T-cell (primary cell): ENCODE measurements at regions of chr11 and their contacts with region 1.

Region 1: DNA sequence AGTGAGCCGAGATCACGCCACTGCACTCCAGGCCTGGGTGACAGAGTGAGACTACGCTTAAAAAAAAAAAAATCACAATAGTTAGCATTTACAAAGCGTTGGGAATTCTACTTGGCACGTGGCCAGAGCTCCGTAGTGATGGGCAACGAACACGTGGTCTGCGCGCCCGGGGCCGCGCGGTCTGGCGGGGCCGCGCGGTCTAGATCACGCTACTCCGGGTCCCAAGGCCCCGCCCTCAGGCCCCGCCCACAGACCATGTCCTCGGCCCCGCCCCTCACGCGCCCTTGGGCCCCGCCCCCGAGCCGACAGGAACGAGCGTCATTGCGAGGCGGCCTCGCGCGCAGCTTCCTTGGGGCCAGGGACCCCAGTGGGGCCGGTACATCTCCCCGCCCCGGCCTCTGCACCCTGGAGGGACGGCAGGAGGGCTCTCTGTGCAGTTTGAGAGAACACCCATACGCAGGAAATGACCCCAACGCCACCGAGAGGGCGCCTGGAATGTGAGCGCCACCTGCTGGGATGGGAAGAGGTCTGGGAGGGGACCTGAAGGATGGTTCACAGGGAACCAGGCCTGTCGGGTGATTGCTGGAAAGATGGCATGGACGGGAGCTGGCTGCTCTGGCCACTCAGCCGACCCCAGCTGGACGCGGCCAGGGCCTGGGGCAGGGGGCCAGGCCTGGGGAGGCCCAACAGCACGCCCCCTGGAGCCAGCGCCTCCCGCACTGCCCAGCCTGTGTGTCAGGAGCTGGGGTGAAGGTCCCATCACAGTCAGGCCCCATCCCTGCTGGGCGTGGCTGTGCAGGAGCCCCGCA is 2.0 kb upstream of the PTDSS2 start:
- DNase-seq: peak; percentile 81 to 98 (median 93)
- ATAC-seq: peak; percentile 65 to 72 (median 65)
- H3K4me3 ChIP-seq: peak overlapping the region; percentile 66 to 83
- H3K4me3 Mint-ChIP-seq: peak overlapping the region; percentile 84 to 87 (median 86)
- H3K27ac ChIP-seq: peak overlapping the region; percentile 91
- H3K27ac Mint-ChIP-seq: peak overlapping the region; percentile 92 to 95
- H3K4me1 ChIP-seq: peaks cover 12 to 38% of the 10 kb centered on the region in 2 experiments
- H3K4me1 Mint-ChIP-seq: peaks cover 9 to 19% (median 19%) of the 10 kb centered on the region in 3 donors
- H3K27me3 ChIP-seq: peaks cover 0 to 5% of the 10 kb centered on the region in 2 experiments
- H3K27me3 Mint-ChIP-seq: no peaks in the 10 kb centered on the region

Region 2: GRCh38 chr11:406978-407739 is 41.0 kb before region 1 on chr11:
- CTCF ChIA-PET with region 1: interaction called, 3 to 38 read pairs
- POLR2A ChIA-PET with region 1: interaction called, 6 to 11 read pairs
- DNase-seq: peak; percentile 52 to 96 (median 92)
- ATAC-seq: peak; percentile 84 to 88 (median 86)
- H3K4me3 ChIP-seq: peak overlapping the region in 1 of 2 donors; percentile 34
- H3K4me3 Mint-ChIP-seq: peak overlapping the region; percentile 34 to 41 (median 41)
- H3K27ac ChIP-seq: peak overlapping the region; percentile 69
- H3K27ac Mint-ChIP-seq: peak overlapping the region; percentile 69 to 84
- H3K4me1 ChIP-seq: peaks cover 5 to 55% of the 10 kb centered on the region in 2 experiments
- H3K4me1 Mint-ChIP-seq: peaks cover 11 to 19% (median 12%) of the 10 kb centered on the region in 3 donors
- H3K27me3 ChIP-seq: peaks cover 0 to 15% of the 10 kb centered on the region in 2 experiments
- H3K27me3 Mint-ChIP-seq: no peaks in the 10 kb centered on the region

Region 3: GRCh38 chr11:413120-414081 is 34.7 kb before region 1 on chr11:
- CTCF ChIA-PET with region 1: interaction called in 1 of 2 experiments, 12 read pairs
- POLR2A ChIA-PET with region 1: no interaction called
- DNase-seq: peak in 4 of 35 experiments; percentile 12 to 42 (median 28)
- ATAC-seq: no peak
- H3K4me3 ChIP-seq: peak overlapping the region; percentile 57 to 90
- H3K4me3 Mint-ChIP-seq: peak overlapping the region; percentile 74 to 100 (median 79)
- H3K27ac ChIP-seq: peak overlapping the region; percentile 44
- H3K27ac Mint-ChIP-seq: peak overlapping the region; percentile 86 to 90
- H3K4me1 ChIP-seq: peaks cover 12 to 63% of the 10 kb centered on the region in 2 experiments
- H3K4me1 Mint-ChIP-seq: peaks cover 21 to 38% (median 35%) of the 10 kb centered on the region in 3 donors
- H3K27me3 ChIP-seq: no peaks in the 10 kb centered on the region
- H3K27me3 Mint-ChIP-seq: no peaks in the 10 kb centered on the region